ENCODE measurements at regions of chr19 and their contacts with region 1.

Region 1: DNA sequence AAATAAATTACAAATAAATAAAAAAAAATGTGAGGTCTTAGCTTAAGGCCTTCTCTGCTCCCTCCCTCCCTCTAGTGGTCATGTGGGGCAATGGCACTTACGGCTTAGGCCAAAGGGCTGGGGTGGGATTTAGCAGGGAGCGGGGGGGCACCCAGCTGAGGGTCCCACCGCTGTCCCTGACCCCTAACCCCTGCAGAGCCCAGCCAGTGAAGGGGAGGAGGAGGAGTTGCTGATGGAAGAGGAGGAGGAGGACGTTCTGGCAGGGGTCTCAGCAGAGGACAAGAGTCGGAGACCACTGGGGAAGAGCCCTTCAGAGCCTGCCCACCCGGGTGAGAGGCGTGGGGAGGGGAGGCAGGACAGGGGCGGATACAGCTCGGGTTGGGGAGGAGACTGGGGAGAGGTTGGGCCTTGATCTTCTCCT is 9.3 kb downstream of the MPND start:
- DNase-seq: peak; percentile 72
- H3K4me3 Mint-ChIP-seq: no peak overlapping the region
- H3K27ac Mint-ChIP-seq: no peak overlapping the region
- H3K4me1 Mint-ChIP-seq: no peaks in the 10 kb centered on the region
- H3K27me3 Mint-ChIP-seq: no peaks in the 10 kb centered on the region
- CTCF ChIP-seq: peak; percentile 90

Region 2: GRCh38 chr19:4267101-4267900 is 85.4 kb before region 1 on chr19:
- CTCF ChIA-PET with region 1: interaction called, 33 read pairs
- POLR2A ChIA-PET with region 1: interaction called, 3 read pairs
- intact Hi-C with region 1: loop called (anchors 1 kb)
- DNase-seq: peak; percentile 77
- H3K4me3 Mint-ChIP-seq: no peak overlapping the region
- H3K27ac Mint-ChIP-seq: no peak overlapping the region
- H3K4me1 Mint-ChIP-seq: peaks cover 5% of the 10 kb centered on the region
- H3K27me3 Mint-ChIP-seq: no peaks in the 10 kb centered on the region
- CTCF ChIP-seq: peak; percentile 87

Region 3: DNA sequence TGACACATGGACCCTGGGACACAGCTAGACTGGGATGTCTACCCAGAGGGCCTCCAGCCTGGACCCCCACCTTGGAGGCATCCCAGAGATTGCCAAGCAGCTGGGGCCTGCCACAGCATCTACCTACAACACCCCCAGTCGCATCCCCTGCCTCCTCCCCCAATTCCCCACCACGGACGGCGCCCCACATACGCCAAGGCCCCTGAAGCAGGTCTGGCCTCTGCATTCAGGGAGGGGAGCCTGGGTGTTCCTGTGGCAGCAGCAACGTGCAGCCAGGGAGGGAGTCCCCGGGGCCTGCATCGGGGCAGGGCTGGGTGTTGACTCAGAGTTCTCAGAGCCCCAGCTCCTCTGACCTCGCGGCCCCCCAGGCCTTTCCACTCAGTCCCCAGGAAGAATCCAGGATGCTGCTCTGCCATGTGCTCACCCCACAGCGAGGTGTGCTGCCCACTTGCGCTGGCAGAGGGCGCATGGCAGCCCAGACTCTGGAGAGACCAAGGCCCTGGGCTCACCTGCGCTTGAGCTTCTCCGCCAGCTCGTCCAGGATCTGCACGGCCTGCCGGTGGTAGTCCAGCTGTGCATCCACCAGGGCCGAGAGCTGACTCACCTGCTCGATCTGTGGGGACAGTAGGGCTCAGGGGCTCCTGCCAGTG is 10.3 kb after region 1 on chr19:
- CTCF ChIA-PET with region 1: interaction called, 23 read pairs
- POLR2A ChIA-PET with region 1: interaction called, 3 read pairs
- intact Hi-C with region 1: no loop called
- DNase-seq: peak; percentile 27
- H3K4me3 Mint-ChIP-seq: no peak overlapping the region
- H3K27ac Mint-ChIP-seq: no peak overlapping the region
- H3K4me1 Mint-ChIP-seq: no peaks in the 10 kb centered on the region
- H3K27me3 Mint-ChIP-seq: no peaks in the 10 kb centered on the region
- CTCF ChIP-seq: peak; percentile 24